RWPE1 (cell line): ENCODE measurements at regions of chr12 and their contacts with region 1.

Region 1: DNA sequence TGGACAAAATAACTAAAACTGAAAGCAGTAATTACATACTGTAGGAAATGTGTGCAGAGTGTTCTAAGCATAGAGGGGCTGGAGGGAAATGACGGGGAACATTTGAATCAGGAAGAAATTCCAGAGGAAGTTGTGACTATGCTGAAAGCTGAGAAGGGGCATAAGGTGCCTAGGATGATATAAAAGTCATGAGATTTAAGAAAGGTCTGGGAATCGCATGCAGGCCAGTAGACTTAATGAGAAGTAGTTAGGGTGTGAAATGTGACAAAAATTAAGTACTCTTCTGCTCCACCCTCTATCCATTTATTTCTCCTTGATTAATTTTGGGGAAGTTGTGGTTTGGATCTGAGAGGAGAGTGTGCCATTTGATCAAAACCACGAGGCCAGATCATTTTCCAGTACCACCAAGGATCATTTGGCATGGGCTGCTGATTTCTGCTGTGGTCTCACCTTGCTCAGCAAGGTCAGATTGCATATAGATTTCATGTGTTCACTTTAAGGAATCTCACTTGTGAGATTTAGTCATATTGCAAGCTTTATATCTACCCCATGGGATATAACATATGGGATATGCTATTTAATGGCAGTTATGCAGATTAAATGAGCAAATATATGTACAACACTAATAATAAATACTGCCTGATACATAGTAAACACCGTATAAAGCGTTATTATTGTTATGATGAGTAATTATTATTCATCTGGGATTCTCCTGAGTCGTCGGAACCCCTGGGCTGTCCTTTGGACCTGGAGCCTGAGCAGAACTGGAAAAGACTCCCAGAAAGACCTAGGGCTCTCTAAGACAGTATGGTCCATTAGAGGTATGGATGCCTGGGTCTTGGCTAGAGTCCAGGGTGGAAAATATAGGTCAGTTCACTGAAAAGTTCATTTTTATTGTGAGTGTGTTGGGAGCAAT is 72.3 kb downstream of the SRGAP1 start:
- DNase-seq: peak; percentile 35
- H3K27ac ChIP-seq: peak overlapping the region; percentile 79
- CTCF ChIP-seq: no peak

Region 2: DNA sequence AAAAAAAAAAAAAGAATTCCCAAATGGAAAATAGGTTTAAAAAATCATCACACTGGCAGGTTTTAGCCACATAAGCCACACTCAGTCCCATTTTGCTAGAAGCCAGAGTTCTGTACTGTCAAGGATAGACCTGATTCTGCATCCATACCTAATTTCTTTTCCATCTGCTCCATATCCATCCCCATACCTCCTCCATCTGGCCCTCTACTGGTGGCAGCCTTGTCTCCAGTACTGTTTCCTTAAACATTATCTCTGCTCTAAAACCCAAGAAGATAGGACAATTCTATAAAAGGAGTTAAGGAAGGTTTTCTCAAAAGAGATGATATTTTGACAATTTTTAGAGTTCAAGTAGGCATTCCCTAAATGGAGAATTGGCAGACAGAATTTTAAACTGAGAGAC is 163.1 kb before region 1 on chr12:
- CTCF ChIA-PET with region 1: no interaction called
- POLR2A ChIA-PET with region 1: no interaction called
- DNase-seq: no peak
- H3K27ac ChIP-seq: no peak overlapping the region
- CTCF ChIP-seq: no peak

Region 3: DNA sequence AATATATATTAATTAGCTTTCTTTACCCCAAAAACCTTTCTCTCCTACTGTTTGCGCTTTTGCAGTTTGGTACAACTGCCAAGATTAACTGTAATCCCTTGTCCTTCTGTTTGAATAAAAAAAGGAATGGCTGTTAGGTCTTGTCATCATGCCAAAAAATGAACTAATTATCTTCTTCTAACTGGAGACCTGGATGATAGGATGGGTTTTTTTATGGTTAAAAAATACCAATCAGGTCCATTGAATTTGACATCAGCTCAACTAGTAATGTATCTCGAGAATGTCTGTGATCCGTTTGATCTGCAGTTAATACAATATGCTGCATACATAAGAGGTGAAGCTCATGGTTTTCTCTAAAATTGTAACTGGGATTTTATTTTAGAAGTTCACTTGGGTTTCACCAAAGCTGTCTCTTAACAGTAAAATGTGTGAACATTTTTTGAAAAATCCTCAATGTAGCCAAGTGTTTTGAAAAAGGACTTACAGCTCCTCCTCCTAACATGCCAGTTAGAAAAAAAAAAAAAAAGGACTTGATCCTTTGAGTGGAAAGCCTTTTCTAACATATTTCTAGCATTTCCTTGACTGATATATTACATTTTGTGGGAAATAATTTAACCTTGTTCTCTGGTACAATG is 24.5 kb after region 1 on chr12:
- CTCF ChIA-PET with region 1: no interaction called
- POLR2A ChIA-PET with region 1: interaction called, 11 read pairs
- DNase-seq: no peak
- H3K27ac ChIP-seq: no peak overlapping the region
- CTCF ChIP-seq: no peak